Mammary epithelial cell (primary cell): ENCODE measurements at regions of chr6 and their contacts with region 1.

Region 1: GRCh38 chr6:99425647-99426453 is 742 bp upstream of the PNISR start:
- DNase-seq: peak; percentile 77
- H3K4me3 ChIP-seq: peak overlapping the region; percentile 76 to 89 (median 88)
- H3K27ac ChIP-seq: peak overlapping the region; percentile 98
- H3K4me1 ChIP-seq: peaks cover 13% of the 10 kb centered on the region
- H3K27me3 ChIP-seq: no peaks in the 10 kb centered on the region
- CTCF ChIP-seq: peak in 1 of 2 donors; percentile 58

Region 2: DNA sequence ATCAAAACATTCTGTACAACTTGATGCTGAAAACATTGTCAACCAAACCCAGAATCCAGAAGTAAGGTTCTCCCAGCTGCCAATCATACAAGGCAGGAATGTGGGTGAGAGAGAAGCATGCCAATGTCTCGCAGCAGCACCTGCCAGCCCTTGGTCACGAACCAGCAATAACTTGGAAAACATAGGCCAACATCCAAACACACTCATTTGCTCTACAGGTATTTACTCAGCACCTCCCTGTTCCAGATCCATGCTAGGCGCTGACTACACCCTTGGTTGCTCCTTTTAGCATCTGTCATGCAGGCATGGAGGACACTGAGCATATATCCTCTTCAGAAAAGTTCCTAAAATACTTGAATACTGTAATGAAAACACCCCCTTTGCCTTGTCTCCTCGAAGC is 140.0 kb before region 1 on chr6:
- CTCF ChIA-PET with region 1: no interaction called
- dilution Hi-C with region 1: no loop called
- in situ Hi-C with region 1: no loop called
- intact Hi-C with region 1: loop called (anchors 5 kb)
- DNase-seq: no peak
- H3K4me3 ChIP-seq: no peak overlapping the region
- H3K27ac ChIP-seq: no peak overlapping the region
- H3K4me1 ChIP-seq: no peaks in the 10 kb centered on the region
- H3K27me3 ChIP-seq: no peaks in the 10 kb centered on the region
- CTCF ChIP-seq: no peak

Region 3: DNA sequence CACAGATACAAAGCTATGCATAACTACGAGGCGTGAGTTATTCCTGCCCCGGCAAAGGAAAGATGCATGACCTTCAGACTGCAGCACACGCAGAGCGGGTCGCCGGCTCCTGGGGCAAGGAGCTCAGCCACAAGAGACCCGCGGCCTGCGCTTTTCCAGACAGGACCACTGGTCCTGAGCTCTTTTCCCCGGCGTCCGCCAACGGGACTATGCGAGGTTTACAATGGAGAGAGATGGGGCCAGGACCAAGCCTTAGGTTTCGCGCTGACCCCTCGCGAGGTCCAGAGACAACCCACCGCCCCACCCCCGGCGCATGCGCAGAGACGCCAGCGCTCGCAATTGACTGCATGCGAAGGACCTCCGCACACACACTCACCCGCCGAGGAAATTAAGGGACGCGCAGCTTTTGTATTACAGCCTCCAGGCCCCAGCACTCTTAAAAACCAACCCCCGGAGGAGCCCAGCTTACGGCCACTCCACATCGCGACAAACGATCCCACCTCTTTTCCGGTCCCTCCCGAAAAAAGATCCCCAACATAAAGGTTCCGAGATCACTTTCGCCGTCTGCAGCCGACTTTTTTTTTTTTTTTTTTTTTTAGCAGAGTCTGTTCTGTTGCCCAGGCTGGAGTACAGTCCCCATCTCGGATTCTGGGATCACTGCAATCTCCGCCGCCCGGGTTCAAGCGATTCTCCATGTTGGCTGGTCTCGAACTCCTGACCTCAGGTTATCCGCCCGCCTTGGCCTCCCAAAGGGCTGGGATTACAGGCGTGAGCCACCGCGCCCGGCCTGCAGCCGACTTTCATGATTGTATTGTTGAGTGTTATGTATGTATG is 31.9 kb before region 1 on chr6 and contains the start of gene COQ3:
- CTCF ChIA-PET with region 1: no interaction called
- dilution Hi-C with region 1: no loop called
- in situ Hi-C with region 1: no loop called
- intact Hi-C with region 1: loop called (anchors 1 kb)
- DNase-seq: peak; percentile 65
- H3K4me3 ChIP-seq: peak within 1 kb of the TSS; percentile 74 to 88 (median 84)
- H3K27ac ChIP-seq: peak within 1 kb of the TSS; percentile 69
- H3K4me1 ChIP-seq: no peaks in the 10 kb centered on the region
- H3K27me3 ChIP-seq: no peaks in the 10 kb centered on the region
- CTCF ChIP-seq: no peak
- total RNA-seq, gene COQ3: 4.3 to 12.8 TPM

Region 4: GRCh38 chr6:99568103-99568933 is 142.5 kb after region 1 on chr6 and contains the start of gene CCNC:
- CTCF ChIA-PET with region 1: no interaction called
- dilution Hi-C with region 1: no loop called
- in situ Hi-C with region 1: no loop called
- intact Hi-C with region 1: loop called (anchors 1 kb)
- DNase-seq: peak; percentile 95
- H3K4me3 ChIP-seq: peak within 1 kb of the TSS; percentile 73 to 92 (median 80)
- H3K27ac ChIP-seq: peak within 1 kb of the TSS; percentile 88
- H3K4me1 ChIP-seq: peaks cover 4% of the 10 kb centered on the region
- H3K27me3 ChIP-seq: no peaks in the 10 kb centered on the region
- CTCF ChIP-seq: no peak
- total RNA-seq, gene CCNC: 79.3 to 130 TPM

Region 5: DNA sequence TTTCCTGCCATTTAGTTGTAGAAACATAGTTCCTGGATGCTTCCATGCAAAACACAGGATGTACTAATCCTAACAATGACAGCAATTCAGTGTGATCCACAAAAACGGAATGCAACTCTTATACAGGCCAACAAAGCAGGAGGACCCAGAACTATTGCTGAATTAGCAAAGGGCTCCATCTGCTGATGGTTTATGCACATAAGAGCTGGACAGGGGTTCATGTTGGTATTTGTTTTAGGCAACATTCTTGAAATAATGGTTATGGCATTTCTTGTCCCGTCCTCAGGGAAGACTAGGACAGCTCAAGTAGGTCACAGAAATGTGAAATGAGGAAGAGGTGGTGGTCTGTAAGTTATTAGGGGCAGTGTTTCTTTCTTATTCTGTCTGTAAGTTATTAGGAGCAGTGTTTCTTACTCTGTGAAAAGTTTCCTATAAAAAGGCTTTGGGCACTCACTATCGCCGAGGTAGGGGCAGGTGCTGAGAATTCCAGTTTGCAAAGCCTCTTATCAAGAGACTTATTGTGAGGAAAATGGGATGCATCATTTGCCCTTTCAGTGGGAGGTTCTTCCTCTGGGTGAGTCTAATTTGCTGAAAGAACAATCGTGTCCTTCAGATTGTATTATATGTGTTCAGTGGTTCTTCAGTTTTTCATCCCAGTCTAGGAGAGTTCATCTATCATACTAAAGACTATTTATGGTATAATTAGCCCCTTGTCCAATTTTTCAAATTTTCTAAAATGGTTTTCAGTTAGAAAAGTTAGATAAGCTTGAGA is 397.1 kb after region 1 on chr6:
- CTCF ChIA-PET with region 1: no interaction called
- dilution Hi-C with region 1: no loop called
- in situ Hi-C with region 1: no loop called
- intact Hi-C with region 1: loop called (anchors 5 kb)
- DNase-seq: peak; percentile 69
- H3K4me3 ChIP-seq: peak overlapping the region in 2 of 3 experiments; percentile 17 to 30
- H3K27ac ChIP-seq: no peak overlapping the region
- H3K4me1 ChIP-seq: peaks cover 9% of the 10 kb centered on the region
- H3K27me3 ChIP-seq: no peaks in the 10 kb centered on the region
- CTCF ChIP-seq: peak; percentile 66 to 75